ENCODE measurements at regions of chr16 and their contacts with region 1.

Region 1: DNA sequence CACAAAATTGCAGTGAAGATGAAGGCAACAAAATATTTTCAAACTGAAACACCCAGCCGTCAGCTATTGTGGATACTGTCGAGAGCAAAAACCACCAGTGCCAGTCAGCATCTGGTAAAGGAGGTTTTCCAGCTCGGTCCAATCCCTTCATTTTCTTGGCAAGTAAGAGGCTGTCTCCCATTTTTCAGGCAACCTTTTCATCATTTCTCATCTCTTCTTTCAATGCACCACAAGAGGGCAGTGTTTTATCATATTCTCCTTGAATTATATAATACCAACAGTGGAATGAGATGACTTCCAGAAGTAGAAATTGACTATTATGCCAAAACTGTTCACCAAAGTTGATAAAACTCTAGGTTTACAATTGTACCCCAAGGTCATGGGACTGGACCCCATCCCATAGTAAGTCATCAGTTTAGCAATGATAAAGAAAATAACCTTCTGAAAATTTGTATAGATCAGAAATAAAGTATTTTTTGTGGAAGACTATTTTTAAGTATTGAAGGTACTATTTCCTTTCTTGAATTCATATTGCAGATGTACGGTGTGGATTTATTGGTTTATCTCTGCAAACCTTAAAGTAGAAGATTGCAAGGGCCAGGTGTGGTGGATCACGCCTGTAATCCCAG is 16.8 kb downstream of the NQO1 start:
- DNase-seq: no peak
- H3K4me3 ChIP-seq: no peak overlapping the region
- H3K27ac ChIP-seq: peak overlapping the region; percentile 73 to 81 (median 79)
- H3K4me1 ChIP-seq: peaks cover 35 to 46% of the 10 kb centered on the region in 2 donors
- H3K27me3 ChIP-seq: no peaks in the 10 kb centered on the region
- CTCF ChIP-seq: peak; percentile 52 to 88 (median 60)
- POLR2A ChIP-seq: no peak

Region 2: GRCh38 chr16:69404275-69404805 is 305.2 kb before region 1 on chr16:
- intact Hi-C with region 1: loop called (anchors 10 kb)
- DNase-seq: peak; percentile 43 to 63
- H3K4me3 ChIP-seq: no peak overlapping the region
- H3K27ac ChIP-seq: peak overlapping the region; percentile 61 to 73 (median 72)
- H3K4me1 ChIP-seq: peaks cover 16% of the 10 kb centered on the region in 2 donors
- H3K27me3 ChIP-seq: no peaks in the 10 kb centered on the region
- CTCF ChIP-seq: no peak
- POLR2A ChIP-seq: peak in 1 of 2 donors; percentile 12

Region 3: GRCh38 chr16:69754469-69755310 is 45.1 kb after region 1 on chr16 and contains the start of gene NOB1:
- intact Hi-C with region 1: loop called (anchors 5 kb)
- DNase-seq: peak; percentile 95 to 96
- H3K4me3 ChIP-seq: peak within 1 kb of the TSS; percentile 21 to 75 (median 69)
- H3K27ac ChIP-seq: peak within 1 kb of the TSS; percentile 22 to 50 (median 45)
- H3K4me1 ChIP-seq: peaks cover 9 to 15% of the 10 kb centered on the region in 2 donors
- H3K27me3 ChIP-seq: no peaks in the 10 kb centered on the region
- CTCF ChIP-seq: peak; percentile 89 to 100 (median 98)
- POLR2A ChIP-seq: peak in 1 of 2 donors; percentile 67
- total RNA-seq, gene NOB1: 37.4 to 51.2 (median 43.1) TPM